ENCODE measurements at regions of chr16 and their contacts with region 1.

Region 1: DNA sequence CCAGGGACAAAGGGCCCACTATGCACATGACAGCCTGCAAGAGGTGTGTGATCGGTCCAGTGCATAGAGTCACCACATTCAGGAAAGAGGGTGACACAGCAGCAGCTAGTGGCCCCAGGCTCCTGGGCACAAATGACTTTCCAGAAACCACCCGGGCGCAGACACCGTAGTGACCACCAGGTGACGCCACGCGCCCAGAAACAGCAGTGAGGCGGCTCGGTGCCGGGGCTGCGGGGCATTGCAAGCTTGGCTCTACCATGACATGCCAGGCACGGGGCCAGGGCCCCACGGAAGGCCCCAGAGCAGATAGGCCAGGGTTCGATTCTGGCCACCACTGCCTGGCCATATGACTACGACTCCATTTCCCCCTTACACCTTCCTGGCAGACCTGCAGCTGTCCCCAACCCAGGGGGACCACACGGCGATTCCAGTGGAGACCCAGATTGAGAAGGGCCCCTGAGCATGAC is 6.7 kb downstream of the RHBDF1 start:
- DNase-seq: peak; percentile 76
- H3K4me3 Mint-ChIP-seq: no peak overlapping the region
- H3K27ac Mint-ChIP-seq: no peak overlapping the region
- H3K4me1 Mint-ChIP-seq: no peaks in the 10 kb centered on the region
- H3K27me3 Mint-ChIP-seq: no peaks in the 10 kb centered on the region
- CTCF ChIP-seq: peak; percentile 98

Region 2: DNA sequence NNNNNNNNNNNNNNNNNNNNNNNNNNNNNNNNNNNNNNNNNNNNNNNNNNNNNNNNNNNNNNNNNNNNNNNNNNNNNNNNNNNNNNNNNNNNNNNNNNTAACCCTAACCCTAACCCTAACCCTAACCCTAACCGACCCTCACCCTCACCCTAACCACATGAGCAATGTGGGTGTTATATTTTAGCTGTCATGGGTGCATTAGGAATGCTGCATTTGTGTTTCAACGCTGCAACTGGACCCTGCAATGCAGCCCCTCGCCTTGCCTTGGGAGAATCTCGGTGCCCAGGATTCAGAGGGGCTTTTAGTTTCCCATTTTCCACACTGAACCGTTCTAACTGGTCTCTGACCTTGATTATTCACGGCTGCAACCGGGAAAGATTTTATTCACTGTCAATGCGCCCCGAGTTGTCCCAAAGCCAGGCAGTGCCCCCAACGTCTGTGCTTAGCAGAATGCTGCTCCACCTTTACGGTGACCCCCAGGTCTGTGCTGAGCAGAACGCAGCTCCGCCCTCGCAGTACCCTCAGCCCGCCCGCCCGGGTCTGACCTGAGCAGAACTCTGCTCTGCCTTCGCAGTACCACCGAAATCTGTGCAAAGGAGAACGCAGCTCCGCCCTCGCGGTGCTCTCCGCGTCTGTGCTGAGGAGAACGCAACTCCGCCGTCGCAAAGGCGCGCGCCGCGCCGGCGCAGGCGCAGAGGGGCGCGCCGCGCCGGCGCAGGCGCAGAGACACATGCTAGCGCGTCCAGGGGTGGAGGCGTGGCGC is 55.6 kb before region 1 on chr16:
- CTCF ChIA-PET with region 1: no interaction called
- POLR2A ChIA-PET with region 1: no interaction called
- intact Hi-C with region 1: no loop called
- DNase-seq: no peak
- H3K4me3 Mint-ChIP-seq: peak overlapping the region; percentile 61
- H3K27ac Mint-ChIP-seq: no peak overlapping the region
- H3K4me1 Mint-ChIP-seq: no peaks in the 10 kb centered on the region
- H3K27me3 Mint-ChIP-seq: no peaks in the 10 kb centered on the region
- CTCF ChIP-seq: no peak

Region 3: GRCh38 chr16:77807-78443 is 12.2 kb after region 1 on chr16 and contains the start of gene MPG:
- CTCF ChIA-PET with region 1: interaction called, 18 read pairs
- POLR2A ChIA-PET with region 1: interaction called, 8 read pairs
- intact Hi-C with region 1: no loop called
- DNase-seq: peak; percentile 80
- H3K4me3 Mint-ChIP-seq: peak within 1 kb of the TSS; percentile 82
- H3K27ac Mint-ChIP-seq: peak within 1 kb of the TSS; percentile 85
- H3K4me1 Mint-ChIP-seq: peaks cover 22% of the 10 kb centered on the region
- H3K27me3 Mint-ChIP-seq: no peaks in the 10 kb centered on the region
- CTCF ChIP-seq: no peak
- total RNA-seq, gene MPG: 62.8 and 66.1 TPM in 2 replicates

Region 4: GRCh38 chr16:180938-181667 is 115.4 kb after region 1 on chr16:
- CTCF ChIA-PET with region 1: interaction called, 11 read pairs
- POLR2A ChIA-PET with region 1: no interaction called
- intact Hi-C with region 1: loop called (anchors 1 kb)
- DNase-seq: peak; percentile 65
- H3K4me3 Mint-ChIP-seq: no peak overlapping the region
- H3K27ac Mint-ChIP-seq: no peak overlapping the region
- H3K4me1 Mint-ChIP-seq: no peaks in the 10 kb centered on the region
- H3K27me3 Mint-ChIP-seq: peaks cover 11% of the 10 kb centered on the region
- CTCF ChIP-seq: peak; percentile 97